ENCODE measurements at regions of chr18 and their contacts with region 1.

Region 1: DNA sequence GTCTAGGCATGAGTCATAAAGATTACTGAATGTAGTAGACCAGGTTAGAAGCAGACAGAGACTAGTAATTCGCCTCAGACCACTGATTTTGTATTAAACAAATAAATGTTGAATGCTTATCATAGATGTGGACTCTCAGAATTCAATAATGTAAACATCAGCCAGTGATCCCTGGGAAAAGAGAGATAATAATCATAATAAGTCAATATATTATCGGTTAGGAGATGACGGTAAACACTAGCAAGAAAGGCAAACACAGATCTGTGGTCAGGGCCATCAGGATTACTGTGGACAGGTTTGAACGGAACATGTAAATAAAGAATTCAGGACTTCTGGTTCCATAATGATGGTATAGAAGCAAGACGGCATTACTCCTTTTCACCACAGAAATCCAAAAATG is 861.6 kb downstream of the CBLN2 start:
- DNase-seq: no peak
- H3K4me3 ChIP-seq: no peak overlapping the region
- H3K27ac ChIP-seq: no peak overlapping the region
- H3K4me1 ChIP-seq: no peaks in the 10 kb centered on the region
- H3K27me3 ChIP-seq: no peaks in the 10 kb centered on the region
- CTCF ChIP-seq: no peak

Region 2: DNA sequence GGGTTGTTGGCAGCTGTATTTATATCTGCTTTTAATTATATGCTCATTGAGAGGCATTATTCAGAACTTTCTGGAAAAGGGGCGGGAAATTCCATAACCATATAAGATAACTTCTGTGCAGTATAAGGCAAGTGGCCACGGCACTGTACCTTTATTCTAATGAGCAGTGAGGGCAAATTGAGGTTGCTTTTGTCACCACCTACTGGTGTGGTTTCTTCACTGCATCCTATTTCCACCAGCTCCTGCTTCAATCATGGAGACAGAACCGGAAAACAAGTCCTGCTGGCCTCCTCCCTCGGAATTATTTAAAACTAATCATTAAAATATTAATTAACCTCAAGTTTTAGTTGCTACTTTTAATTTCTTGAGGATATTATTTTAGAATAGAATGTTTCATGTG is 102.2 kb after region 1 on chr18:
- CTCF ChIA-PET with region 1: no interaction called
- dilution Hi-C with region 1: no loop called
- in situ Hi-C with region 1: no loop called
- intact Hi-C with region 1: loop called (anchors 5 kb)
- DNase-seq: no peak
- H3K4me3 ChIP-seq: no peak overlapping the region
- H3K27ac ChIP-seq: no peak overlapping the region
- H3K4me1 ChIP-seq: no peaks in the 10 kb centered on the region
- H3K27me3 ChIP-seq: no peaks in the 10 kb centered on the region
- CTCF ChIP-seq: peak in 1 of 2 donors; percentile 19

Region 3: DNA sequence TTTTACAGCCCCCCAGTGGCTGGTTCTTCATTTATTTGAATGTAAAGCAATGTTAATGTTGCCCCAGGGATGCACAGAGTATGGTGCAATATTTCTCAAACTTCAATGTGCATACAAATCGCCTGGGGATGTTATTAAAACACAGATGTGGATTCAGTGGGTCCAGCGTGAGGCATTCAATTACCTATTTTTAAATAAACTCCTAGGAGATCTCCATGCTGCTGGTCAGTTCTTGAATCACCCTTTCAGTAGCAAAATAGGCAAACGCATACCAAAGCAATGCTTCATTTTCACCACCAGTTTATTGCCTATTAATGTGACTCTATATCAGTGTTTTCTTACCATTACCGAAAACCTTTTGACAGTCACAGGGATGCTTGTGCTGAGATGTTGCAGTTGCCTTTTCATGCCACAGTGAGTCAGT is 330.9 kb after region 1 on chr18:
- CTCF ChIA-PET with region 1: no interaction called
- dilution Hi-C with region 1: no loop called
- in situ Hi-C with region 1: no loop called
- intact Hi-C with region 1: no loop called
- DNase-seq: no peak
- H3K4me3 ChIP-seq: no peak overlapping the region
- H3K27ac ChIP-seq: no peak overlapping the region
- H3K4me1 ChIP-seq: no peaks in the 10 kb centered on the region
- H3K27me3 ChIP-seq: no peaks in the 10 kb centered on the region
- CTCF ChIP-seq: no peak